ENCODE measurements at regions of chr11 and their contacts with region 1.

Region 1: DNA sequence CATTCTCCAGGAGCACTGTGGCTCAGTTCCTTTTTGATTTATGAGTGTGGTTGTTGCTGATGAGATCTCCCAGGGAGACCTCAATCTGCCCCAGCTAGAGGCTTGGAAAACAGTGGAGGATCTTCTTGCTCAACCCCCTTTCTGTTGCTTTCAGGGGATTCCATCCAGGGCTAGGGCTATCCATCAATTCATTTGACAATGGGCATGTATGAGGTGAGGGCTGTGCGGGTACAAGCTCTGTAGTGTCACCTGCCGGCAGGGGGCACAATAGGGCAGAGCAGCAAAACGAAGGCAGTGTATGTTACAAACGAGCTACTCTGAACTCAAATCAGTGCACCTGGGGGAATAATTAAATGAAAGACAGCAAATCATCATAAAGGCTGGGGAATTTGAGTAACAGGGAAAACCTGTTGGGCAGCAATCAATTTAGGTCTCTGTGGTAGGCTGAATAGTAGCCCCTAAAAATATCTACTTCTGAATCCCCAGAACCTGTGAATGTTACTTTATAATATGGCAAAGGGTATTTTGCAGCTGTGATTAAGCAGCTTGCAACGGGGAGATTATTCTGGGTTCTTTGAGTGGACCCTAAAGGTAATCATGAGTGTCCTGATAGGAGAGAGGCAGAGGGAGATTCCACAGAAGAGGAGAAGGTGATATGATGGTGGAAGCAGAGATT is 170.3 kb upstream of the ZBED5 start:
- DNase-seq: peak; percentile 83
- ATAC-seq: peak; percentile 95
- H3K4me3 ChIP-seq: no peak overlapping the region
- H3K27ac ChIP-seq: no peak overlapping the region
- H3K4me1 ChIP-seq: no peaks in the 10 kb centered on the region
- H3K27me3 ChIP-seq: no peaks in the 10 kb centered on the region
- CTCF ChIP-seq: peak; percentile 83

Region 2: DNA sequence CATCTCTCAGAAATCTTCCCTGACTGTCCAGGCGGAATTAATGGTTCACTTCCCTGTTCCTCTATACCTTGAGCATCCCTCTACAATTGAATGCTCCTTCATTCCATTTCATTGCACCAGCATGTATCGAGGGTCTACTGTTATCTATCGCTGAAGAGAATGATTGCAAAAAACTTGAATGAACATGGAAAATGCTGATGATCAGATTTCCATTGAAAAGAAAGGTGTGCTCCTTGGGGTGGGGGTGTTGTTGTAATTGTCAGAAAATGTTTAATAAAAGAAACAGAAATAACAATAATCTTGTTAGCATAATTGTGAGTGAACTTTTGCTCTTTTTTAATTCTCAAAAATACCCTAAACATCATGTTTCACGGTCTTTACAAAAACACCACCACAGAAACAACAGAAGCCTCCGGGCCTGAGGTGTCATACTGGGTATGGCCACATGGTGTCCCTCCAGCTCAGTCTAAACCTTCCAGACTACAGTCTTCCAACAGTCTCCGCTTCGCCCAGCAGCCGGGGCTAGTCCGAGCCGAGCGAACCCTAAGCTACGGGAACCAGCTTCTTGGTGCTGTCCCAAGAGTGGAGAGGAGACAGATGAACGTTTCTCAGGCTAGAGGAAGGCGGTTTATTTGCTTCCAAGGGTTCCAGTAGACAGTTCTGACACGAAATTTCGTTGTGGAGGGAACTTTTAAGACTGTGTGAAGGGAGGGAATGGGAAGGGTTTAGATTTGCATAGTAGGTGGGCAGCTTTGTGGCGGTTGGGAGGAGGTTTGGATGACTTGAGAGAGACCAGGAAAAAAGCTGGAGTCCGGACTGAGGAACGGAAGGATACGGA is 94.5 kb before region 1 on chr11:
- intact Hi-C with region 1: loop called (anchors 10 kb)
- DNase-seq: peak; percentile 92
- ATAC-seq: peak; percentile 90
- H3K4me3 ChIP-seq: peak overlapping the region; percentile 52
- H3K27ac ChIP-seq: peak overlapping the region; percentile 37
- H3K4me1 ChIP-seq: peaks cover 11% of the 10 kb centered on the region
- H3K27me3 ChIP-seq: no peaks in the 10 kb centered on the region
- CTCF ChIP-seq: peak; percentile 98

Region 3: GRCh38 chr11:11148104-11148509 is 120.0 kb after region 1 on chr11:
- intact Hi-C with region 1: no loop called
- DNase-seq: peak; percentile 77
- ATAC-seq: peak; percentile 94
- H3K4me3 ChIP-seq: no peak overlapping the region
- H3K27ac ChIP-seq: no peak overlapping the region
- H3K4me1 ChIP-seq: peaks cover 12% of the 10 kb centered on the region
- H3K27me3 ChIP-seq: no peaks in the 10 kb centered on the region
- CTCF ChIP-seq: peak; percentile 37

Measured in upper lobe of right lung (tissue), 1 donor.